ENCODE measurements at regions of chr9 and their contacts with region 1.

Region 1: DNA sequence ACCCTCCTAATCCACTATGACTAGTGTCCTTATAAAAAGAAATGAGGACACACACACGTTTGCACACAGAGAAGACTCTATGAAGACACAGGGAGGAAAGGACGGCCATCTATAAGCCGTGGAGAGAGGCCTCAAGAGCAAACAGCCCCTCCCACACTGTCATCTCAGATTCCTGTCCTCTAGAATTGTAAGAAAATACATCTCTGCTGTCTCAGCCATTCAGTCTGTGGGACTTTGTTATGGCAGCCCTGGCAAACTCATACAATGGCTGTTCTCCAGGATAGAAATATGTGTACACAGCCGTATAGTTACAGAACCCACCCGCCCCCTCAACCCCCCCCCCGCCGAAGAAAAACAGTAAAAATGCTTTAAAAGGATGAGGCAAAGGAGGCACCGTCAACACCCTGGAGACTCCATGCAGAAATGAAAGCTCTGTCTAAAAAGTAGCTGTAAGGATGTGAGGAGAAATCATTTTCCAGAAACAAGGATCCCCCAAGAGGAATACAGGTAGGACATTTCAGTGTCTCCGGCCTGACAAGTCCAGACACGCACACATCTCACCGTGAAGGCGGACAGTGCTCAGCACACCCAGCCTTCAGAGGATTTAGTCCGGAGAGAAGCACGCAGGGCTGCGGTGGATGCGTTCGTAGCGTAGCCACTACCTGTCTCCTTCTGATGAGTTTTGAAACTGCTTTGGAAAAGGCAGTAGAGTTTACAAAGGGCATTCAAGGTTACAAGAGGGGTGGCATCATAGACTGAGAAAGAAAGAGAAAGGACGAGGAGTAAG is 110.8 kb upstream of the ERCC6L2 start:
- DNase-seq: no peak
- ATAC-seq: no peak
- H3K4me3 ChIP-seq: no peak overlapping the region
- H3K4me3 Mint-ChIP-seq: no peak overlapping the region
- H3K27ac ChIP-seq: no peak overlapping the region
- H3K27ac Mint-ChIP-seq: peak overlapping the region in 1 of 9 donors; percentile 73
- H3K4me1 ChIP-seq: no peaks in the 10 kb centered on the region
- H3K4me1 Mint-ChIP-seq: peaks cover 0 to 4% (median 2%) of the 10 kb centered on the region in 7 donors
- H3K27me3 ChIP-seq: no peaks in the 10 kb centered on the region
- H3K27me3 Mint-ChIP-seq: peaks cover 4 to 18% (median 6%) of the 10 kb centered on the region in 5 donors

Region 2: DNA sequence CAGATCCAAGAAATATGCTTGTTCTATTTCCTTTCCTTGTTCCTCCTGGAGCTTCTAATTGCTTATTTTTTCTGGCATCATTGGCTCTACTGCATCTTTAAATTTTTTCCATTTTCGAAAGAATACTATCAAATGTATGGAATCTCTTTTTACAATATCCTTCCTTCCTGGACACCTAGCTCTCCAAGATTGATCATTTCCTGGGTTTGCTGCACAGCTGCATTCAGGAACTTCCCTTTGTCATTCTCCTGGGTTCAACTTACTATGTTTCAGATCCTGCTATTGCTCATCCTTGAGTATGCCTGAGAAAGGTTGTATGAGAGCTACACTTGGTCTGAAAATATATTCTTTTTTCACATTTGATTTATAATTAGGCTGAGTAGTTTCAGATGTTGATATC is 37.1 kb after region 1 on chr9:
- CTCF ChIA-PET with region 1: no interaction called
- POLR2A ChIA-PET with region 1: no interaction called
- intact Hi-C with region 1: loop called in 1 of 2 experiments (anchors 5 kb)
- DNase-seq: no peak
- ATAC-seq: no peak
- H3K4me3 ChIP-seq: no peak overlapping the region
- H3K4me3 Mint-ChIP-seq: no peak overlapping the region
- H3K27ac ChIP-seq: no peak overlapping the region
- H3K27ac Mint-ChIP-seq: no peak overlapping the region
- H3K4me1 ChIP-seq: no peaks in the 10 kb centered on the region
- H3K4me1 Mint-ChIP-seq: peaks cover 0 to 5% (median 3%) of the 10 kb centered on the region in 7 donors
- H3K27me3 ChIP-seq: no peaks in the 10 kb centered on the region
- H3K27me3 Mint-ChIP-seq: peaks cover 0 to 53% (median 18%) of the 10 kb centered on the region in 5 donors

Region 3: DNA sequence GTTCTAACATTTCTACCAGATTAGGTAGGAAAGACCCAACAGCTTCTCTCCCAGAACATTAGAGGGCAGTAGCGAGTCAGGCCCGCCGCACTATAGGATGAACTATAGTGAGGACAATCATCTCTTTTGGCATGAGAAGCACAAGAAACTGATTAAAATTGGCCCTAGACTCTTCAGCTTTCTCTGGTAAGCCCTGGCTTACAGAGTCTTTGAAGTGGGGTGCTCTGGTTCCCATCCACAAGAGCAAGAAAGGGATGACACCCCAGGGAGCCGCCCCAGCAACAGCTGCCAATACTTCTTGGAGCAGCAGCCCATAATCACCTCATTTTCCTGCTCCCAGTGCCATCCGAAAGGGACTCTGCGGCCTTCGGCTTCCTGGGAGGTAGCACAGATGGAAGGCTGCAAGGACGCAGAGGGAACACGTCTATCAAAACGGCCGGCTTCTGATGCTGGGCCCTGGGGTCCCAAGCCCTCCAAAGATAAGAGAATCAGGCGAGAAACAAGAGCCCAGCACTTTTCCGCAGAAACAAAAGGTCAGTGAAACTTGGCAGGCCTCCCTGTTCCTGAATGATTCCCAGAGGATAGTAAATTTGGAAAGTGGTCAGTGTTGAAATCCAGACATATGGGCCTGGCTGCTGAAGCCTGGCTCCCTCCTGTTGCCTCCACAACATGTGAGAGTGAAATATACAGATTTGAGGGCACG is 468.0 kb after region 1 on chr9:
- CTCF ChIA-PET with region 1: no interaction called
- POLR2A ChIA-PET with region 1: no interaction called
- intact Hi-C with region 1: no loop called
- DNase-seq: peak in 5 of 9 donors; percentile 13 to 42 (median 28)
- ATAC-seq: peak; percentile 69
- H3K4me3 ChIP-seq: no peak overlapping the region
- H3K4me3 Mint-ChIP-seq: no peak overlapping the region
- H3K27ac ChIP-seq: no peak overlapping the region
- H3K27ac Mint-ChIP-seq: peak overlapping the region in 1 of 9 donors; percentile 16
- H3K4me1 ChIP-seq: no peaks in the 10 kb centered on the region
- H3K4me1 Mint-ChIP-seq: peaks cover 0 to 3% (median 0%) of the 10 kb centered on the region in 7 donors
- H3K27me3 ChIP-seq: no peaks in the 10 kb centered on the region
- H3K27me3 Mint-ChIP-seq: peaks cover 15 to 51% (median 26%) of the 10 kb centered on the region in 5 donors